ENCODE measurements at regions of chr2 and their contacts with region 1.

Region 1: DNA sequence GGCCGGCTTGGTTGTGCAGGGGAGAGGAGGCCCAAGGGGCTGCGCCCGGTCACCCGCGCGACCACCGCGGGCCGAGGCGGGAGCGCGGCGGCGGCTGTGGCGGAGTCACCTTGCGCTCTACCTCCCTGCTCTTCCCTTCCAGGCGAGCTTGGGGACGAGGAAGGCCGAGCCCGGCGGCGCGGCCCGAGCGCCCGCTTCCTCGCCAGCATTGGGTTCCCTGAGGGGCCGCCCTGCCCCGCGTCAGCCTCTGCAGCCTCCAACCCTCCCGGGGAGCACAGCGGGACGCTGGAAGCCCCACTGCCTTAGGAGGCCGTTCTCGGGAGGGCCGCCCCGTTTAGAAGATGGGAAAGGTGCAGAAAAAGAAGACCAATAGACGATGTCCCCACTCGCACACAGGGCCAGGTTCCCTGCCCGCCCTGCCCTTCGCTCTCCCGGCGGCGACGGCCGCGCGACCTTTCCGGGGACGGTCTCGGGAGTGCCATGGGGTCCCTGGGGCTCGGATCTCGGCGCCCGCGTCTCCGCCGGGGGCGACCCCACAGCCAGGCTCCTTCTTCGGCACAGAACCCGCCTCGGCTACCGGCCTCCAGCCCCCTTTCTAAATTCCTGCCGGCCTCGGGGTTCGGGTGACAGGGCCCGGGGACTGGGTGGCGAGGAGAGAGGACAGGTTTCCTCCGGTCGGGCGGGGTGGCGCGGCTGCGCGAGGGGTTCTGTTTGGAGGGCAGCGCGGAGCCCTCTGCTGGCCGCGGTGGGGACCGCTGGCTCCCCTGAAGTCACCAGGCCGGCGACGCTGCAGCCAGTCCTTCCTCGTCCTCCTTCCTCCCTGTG is 85.5 kb downstream of the HS6ST1 start:
- DNase-seq: peak; percentile 74 to 95 (median 91)

Region 2: DNA sequence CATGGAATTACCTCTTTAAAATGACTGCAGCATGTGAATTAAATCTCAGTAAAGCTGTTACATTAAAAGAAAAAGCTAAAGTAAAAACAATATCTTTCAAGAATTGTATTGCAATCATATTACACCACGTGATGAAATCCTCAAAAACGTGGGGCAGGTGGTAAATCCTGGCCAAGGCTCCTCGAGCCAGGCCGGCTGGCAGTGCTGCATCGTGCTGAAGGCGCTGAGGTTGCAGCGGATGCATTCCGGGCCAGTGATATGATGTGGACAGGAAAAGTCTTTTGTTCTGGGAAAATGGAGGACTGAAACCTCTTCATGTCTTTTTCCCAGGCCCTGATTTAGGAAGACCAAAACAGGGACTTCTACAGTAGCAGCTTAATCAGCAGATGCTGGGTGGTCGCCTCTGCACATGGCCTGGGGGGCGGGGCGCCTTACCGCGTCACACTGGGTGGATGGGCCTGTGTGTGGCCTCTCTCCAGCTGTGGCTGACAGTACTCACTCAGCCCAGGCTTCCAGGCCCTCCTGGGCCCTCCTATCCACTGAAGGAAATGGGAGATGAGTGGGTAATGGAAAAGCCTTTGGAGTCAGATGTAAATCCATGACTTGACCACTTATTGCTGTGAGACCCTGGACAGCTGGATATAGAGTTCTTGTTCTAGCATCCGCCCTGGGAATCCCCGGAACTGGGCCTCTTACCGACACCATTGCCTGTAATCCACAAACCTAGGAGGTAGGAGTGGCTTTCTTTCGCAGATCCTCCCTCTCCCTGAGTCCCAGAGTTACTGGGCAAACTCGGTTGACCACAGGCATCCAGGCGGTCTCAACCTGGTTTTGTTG is 769.8 kb before region 1 on chr2:
- intact Hi-C with region 1: no loop called
- DNase-seq: no peak

Region 3: DNA sequence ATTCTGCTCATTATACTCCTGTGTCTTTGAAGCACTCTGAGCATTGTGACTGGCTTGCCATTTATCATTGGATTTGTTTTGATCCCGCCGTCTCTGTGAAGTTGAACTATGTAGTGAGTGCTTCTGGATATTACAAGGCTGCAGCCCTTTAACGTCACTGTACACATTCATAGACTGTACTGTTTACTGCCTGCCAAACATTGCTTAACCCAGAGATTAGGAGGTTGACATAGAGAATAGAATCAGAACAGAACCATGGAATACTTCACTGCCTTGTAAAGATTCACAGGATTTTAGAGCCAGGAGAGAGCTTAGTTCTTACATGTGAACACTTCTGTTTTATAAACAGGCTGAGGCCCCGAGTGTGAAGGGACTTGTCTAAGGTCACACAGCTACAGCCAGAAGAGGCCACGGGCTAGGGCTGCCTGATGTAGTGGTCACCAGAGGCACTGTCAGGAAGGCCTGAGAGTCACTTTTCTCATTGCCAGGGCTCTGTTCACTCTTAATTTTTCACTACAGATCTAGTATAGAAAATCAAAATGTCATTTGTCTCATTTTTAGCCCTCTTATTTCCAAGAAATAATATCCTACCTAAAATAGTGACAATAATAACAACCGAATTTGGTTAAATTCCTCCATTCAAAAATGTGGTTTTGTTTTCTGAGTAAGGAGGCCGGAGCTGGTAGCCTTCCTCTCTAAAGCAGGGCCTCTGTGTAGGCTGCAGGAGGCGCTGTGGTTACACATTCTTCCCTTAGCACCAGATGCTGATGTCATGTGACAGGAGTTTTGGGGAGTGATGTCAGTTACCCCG is 54.3 kb before region 1 on chr2:
- intact Hi-C with region 1: loop called (anchors 5 kb)
- DNase-seq: peak; percentile 23 to 88 (median 72)

Region 4: DNA sequence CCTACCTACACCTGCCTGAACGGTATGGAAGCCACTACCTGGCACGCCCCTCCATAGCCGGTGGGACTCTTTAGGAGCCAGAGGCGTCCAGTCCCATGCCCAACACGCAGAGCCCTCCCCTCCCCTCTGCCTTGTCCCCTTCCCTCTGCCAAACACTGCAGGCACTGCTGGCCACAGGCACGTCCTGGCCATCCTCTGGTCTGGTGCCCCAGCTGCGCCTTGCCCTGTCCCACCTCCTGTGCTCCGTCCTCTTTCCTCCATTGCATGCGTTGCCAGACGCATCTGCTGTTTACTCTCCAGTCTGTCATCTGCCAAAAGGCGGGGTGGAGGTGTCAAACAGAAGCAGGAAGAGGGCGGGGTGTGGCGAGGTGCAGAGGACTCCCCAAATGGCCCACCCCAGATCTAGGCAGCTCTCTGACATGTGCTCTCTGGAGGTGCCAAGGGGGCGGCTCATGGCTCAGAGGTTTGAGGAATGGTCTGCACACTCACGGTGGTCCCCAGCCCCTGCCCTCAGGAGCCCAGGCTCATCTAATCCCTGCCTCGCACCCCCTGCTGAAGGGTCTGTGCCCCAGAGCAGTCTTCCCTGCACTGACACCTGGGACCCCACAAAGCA is 40.4 kb after region 1 on chr2:
- intact Hi-C with region 1: loop called (anchors 5 kb)
- DNase-seq: peak in 12 of 42 donors; percentile 1 to 33 (median 10)